Activated naive CD4-positive, alpha-beta T cell treated with anti-CD3 and anti-CD28 coated beads for 36 hours (primary cell): ENCODE measurements at regions of chr12 and their contacts with region 1.

Region 1: GRCh38 chr12:120199595-120200306 is 1.2 kb downstream of the RPLP0 start:
- DNase-seq: peak; percentile 51
- H3K4me3 Mint-ChIP-seq: peak overlapping the region; percentile 93
- H3K27ac Mint-ChIP-seq: peak overlapping the region; percentile 99
- H3K4me1 Mint-ChIP-seq: peaks cover 42% of the 10 kb centered on the region
- H3K27me3 Mint-ChIP-seq: no peaks in the 10 kb centered on the region

Region 2: DNA sequence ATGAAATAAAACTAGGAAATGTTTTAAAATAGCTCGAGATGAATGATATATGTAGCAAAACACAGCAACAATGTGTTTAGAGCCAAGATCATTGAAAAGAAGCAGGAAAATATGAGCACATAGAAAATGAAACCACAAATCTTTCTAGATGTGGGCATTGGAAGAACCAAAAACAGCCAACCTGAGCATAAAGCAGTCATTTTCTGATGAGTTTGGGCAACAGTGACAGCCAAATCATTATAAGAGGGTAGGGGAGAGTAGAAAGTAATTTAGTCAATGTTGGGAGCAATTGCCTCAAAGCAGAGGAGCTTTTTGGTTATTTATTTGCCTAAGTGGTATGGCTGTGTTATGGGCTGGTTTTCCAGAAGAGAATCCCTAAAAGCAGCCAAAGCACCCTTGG is 219.5 kb before region 1 on chr12:
- CTCF ChIA-PET with region 1: no interaction called
- intact Hi-C with region 1: loop called (anchors 2 kb)
- DNase-seq: peak; percentile 43
- H3K4me3 Mint-ChIP-seq: peak overlapping the region; percentile 54
- H3K27ac Mint-ChIP-seq: peak overlapping the region; percentile 84
- H3K4me1 Mint-ChIP-seq: peaks cover 17% of the 10 kb centered on the region
- H3K27me3 Mint-ChIP-seq: no peaks in the 10 kb centered on the region

Region 3: GRCh38 chr12:120086801-120087621 is 112.7 kb before region 1 on chr12:
- CTCF ChIA-PET with region 1: interaction called, 3 read pairs
- intact Hi-C with region 1: loop called (anchors 1 kb)
- DNase-seq: peak; percentile 100
- H3K4me3 Mint-ChIP-seq: peak overlapping the region; percentile 63
- H3K27ac Mint-ChIP-seq: peak overlapping the region; percentile 85
- H3K4me1 Mint-ChIP-seq: peaks cover 41% of the 10 kb centered on the region
- H3K27me3 Mint-ChIP-seq: no peaks in the 10 kb centered on the region

Region 4: DNA sequence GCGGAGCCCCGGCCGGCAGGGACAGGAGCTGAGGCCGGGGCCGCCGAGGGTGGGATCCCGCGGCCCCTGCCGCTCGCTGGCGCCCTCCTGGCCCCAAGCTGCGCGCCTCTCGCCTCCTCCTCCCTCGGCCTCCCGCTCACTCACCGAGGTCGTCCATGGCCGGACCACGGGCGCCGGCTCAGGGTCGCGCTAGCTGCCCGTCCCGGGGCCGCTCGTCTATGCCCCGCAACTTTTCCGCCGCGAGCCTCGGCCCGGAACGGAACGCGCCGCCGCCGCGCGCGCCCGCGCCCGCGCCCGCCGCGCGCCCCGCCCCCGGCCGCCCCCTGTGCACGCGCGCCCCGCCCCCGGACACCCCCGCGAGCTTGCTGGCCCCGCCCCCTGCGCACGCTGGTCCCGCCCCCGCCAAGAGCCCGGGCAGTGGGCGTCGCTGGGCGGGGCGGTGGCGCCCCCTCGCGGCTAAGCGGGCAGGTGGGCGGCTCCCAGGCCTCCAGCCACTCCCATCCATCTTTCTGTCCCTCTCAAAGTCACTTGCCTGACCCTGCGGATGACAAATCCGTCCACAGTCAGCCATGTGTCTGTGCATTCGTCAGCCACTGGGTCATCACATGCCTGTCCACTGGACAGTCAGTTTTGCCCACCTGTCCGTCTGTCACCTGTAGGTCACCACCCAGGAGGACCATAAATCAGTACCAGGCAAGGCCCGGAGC is 65.9 kb after region 1 on chr12 and contains the start of gene PXN:
- CTCF ChIA-PET with region 1: interaction called, 32 read pairs
- intact Hi-C with region 1: loop called (anchors 1 kb)
- DNase-seq: peak; percentile 90
- H3K4me3 Mint-ChIP-seq: peak within 1 kb of the TSS; percentile 89
- H3K27ac Mint-ChIP-seq: peak within 1 kb of the TSS; percentile 87
- H3K4me1 Mint-ChIP-seq: peaks cover 44% of the 10 kb centered on the region
- H3K27me3 Mint-ChIP-seq: no peaks in the 10 kb centered on the region
- total RNA-seq, gene PXN: 109 to 112 TPM

Region 5: GRCh38 chr12:120317224-120318105 is 117.7 kb after region 1 on chr12:
- CTCF ChIA-PET with region 1: interaction called, 4 read pairs
- intact Hi-C with region 1: loop called (anchors 1 kb)
- DNase-seq: peak; percentile 100
- H3K4me3 Mint-ChIP-seq: peak overlapping the region; percentile 87
- H3K27ac Mint-ChIP-seq: peak overlapping the region; percentile 88
- H3K4me1 Mint-ChIP-seq: peaks cover 11% of the 10 kb centered on the region
- H3K27me3 Mint-ChIP-seq: no peaks in the 10 kb centered on the region

Region 6: GRCh38 chr12:120534203-120534702 is 334.5 kb after region 1 on chr12 and contains the start of gene RNF10:
- CTCF ChIA-PET with region 1: no interaction called
- intact Hi-C with region 1: loop called (anchors 10 kb)
- DNase-seq: peak; percentile 78
- H3K4me3 Mint-ChIP-seq: peak within 1 kb of the TSS; percentile 92
- H3K27ac Mint-ChIP-seq: peak within 1 kb of the TSS; percentile 94
- H3K4me1 Mint-ChIP-seq: peaks cover 47% of the 10 kb centered on the region
- H3K27me3 Mint-ChIP-seq: no peaks in the 10 kb centered on the region
- total RNA-seq, gene RNF10: 159 to 166 TPM